ENCODE measurements at regions of chrX and their contacts with region 1.

Region 1: GRCh38 chrX:107672955-107673378 is 44.7 kb downstream of the PRPS1 start:
- DNase-seq: peak; percentile 63
- ATAC-seq: peak; percentile 75
- H3K4me3 ChIP-seq: no peak overlapping the region
- H3K27ac ChIP-seq: no peak overlapping the region
- H3K4me1 ChIP-seq: peaks cover 32 to 42% of the 10 kb centered on the region in 2 experiments
- H3K27me3 ChIP-seq: no peaks in the 10 kb centered on the region
- CTCF ChIP-seq: peak in 2 of 3 experiments; percentile 49 to 64; a peak in 4 of 6 replicates
- POLR2A ChIP-seq: no peak
- RAD21 ChIP-seq: no peak

Region 2: GRCh38 chrX:107716816-107717700 is 44.1 kb after region 1 on chrX:
- CTCF ChIA-PET with region 1: interaction called, 10 read pairs
- POLR2A ChIA-PET with region 1: interaction called, 9 read pairs
- RAD21 ChIA-PET with region 1: interaction called in 1 of 2 experiments, 3 read pairs
- intact Hi-C with region 1: loop called (anchors 1 kb)
- DNase-seq: peak; percentile 46
- ATAC-seq: peak; percentile 81
- H3K4me3 ChIP-seq: peak overlapping the region; percentile 65 to 66
- H3K27ac ChIP-seq: peak overlapping the region; percentile 62; the same call in 1 of the 2 replicates
- H3K4me1 ChIP-seq: peaks cover 13 to 16% of the 10 kb centered on the region in 2 experiments
- H3K27me3 ChIP-seq: no peaks in the 10 kb centered on the region
- CTCF ChIP-seq: no peak
- POLR2A ChIP-seq: no peak
- RAD21 ChIP-seq: no peak

Region 3: GRCh38 chrX:107804427-107804826 is 131.5 kb after region 1 on chrX:
- CTCF ChIA-PET with region 1: no interaction called
- POLR2A ChIA-PET with region 1: no interaction called
- RAD21 ChIA-PET with region 1: no interaction called
- intact Hi-C with region 1: no loop called
- DNase-seq: no peak
- ATAC-seq: no peak
- H3K4me3 ChIP-seq: no peak overlapping the region
- H3K27ac ChIP-seq: no peak overlapping the region
- H3K4me1 ChIP-seq: no peaks in the 10 kb centered on the region
- H3K27me3 ChIP-seq: no peaks in the 10 kb centered on the region
- CTCF ChIP-seq: no peak
- POLR2A ChIP-seq: no peak
- RAD21 ChIP-seq: no peak

Measured in HCT116 (cell line).